Right ventricle myocardium inferior (tissue), 1 donor: ENCODE measurements at regions of chr3 and their contacts with region 1.

Region 1: GRCh38 chr3:120596116-120596852 is at the start of gene NDUFB4:
- DNase-seq: peak; percentile 99
- ATAC-seq: peak; percentile 100
- total RNA-seq, gene NDUFB4: 629 TPM

Region 2: GRCh38 chr3:120344349-120344748 is 251.9 kb before region 1 on chr3:
- intact Hi-C with region 1: no loop called
- DNase-seq: no peak
- ATAC-seq: no peak

Region 3: GRCh38 chr3:120526011-120526870 is 70.0 kb before region 1 on chr3:
- intact Hi-C with region 1: no loop called
- DNase-seq: no peak
- ATAC-seq: no peak

Region 4: GRCh38 chr3:120567370-120568201 is 28.7 kb before region 1 on chr3:
- intact Hi-C with region 1: no loop called
- DNase-seq: no peak
- ATAC-seq: peak; percentile 76

Region 5: DNA sequence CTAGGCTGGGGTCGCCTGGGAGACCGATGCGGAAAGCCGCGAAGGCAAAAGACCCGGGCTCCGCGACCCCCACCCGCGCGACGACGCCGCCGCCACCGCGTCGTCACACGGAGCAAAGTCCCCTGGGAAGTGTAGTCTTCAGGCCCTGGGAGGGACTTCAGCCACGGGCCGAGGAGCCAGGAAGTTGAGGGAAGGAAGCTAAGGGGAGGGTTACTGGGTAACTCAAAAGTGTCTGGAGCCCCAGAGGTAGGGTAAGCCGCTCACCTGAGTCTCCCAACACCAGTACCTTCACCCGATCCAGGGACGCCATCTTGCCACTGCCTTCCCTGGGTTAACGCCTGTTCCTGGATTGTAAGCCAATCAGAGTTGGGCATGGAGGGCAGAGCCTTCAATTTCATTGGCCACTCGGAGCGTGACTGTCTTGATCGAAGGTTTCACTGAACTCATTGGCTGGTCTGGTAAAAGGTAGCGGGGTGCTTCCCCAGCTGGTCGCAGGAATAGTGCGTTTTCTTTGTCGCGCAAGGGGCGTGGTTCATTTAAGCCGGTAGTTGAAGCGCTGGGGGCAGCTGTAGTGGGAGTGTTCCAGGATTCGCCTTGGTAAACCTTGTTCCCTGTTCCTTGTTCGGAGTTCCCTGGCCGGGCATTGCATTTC is 146.0 kb after region 1 on chr3 and contains the starts of genes GTF2E1 and RABL3:
- intact Hi-C with region 1: loop called (anchors 5 kb)
- DNase-seq: peak; percentile 95
- ATAC-seq: peak; percentile 100
- total RNA-seq, gene GTF2E1: 15.0 TPM
- total RNA-seq, gene RABL3: 18.2 TPM